Activated B cell treated with CpG ODN at 0.5 μM for 24 hours (primary cell): ENCODE measurements at regions of chr5 and their contacts with region 1.

Region 1: DNA sequence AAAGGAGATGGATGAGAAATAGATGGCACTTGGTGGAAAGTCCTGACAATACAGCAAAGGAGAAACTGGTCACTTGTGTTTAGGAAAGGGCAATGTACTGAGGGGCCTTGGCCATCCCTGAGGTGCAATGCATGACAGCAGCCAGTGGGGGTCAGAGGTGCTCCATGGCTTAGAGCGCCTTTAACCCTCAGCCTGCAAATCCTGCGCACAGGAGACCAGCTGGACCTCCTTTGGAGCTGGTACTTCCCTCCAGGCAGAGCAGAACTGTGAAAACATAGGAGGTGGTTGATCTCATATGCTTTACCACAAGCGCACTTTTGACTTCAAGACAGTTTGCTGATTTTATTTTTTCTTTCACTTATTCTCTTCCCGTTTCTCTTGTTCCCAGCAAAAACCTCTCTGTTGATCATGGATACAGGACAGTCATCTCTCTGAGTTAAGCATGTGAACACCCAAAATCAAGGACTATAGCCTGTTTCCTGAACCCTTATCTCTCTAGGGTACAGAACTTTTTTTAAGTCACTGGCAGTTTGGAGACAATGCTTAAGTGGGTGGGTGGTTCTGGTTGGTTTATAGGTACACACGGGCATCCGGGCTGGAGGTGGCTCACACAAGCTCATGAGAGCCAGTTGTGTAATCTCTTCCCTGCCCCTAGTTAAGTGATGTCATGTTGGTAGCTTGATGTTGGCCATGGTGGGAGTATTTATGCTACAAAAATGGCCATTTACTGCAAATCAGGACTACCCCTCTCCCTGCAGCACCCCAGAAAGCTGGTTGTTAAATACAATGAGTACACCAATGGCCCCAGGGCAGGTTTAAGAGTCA is 37.6 kb upstream of the ANKRD55 start:
- DNase-seq: peak; percentile 60
- ATAC-seq: peak; percentile 98
- H3K4me3 Mint-ChIP-seq: peak overlapping the region; percentile 49
- H3K27ac Mint-ChIP-seq: peak overlapping the region; percentile 37
- H3K4me1 Mint-ChIP-seq: peaks cover 23% of the 10 kb centered on the region
- H3K27me3 Mint-ChIP-seq: no peaks in the 10 kb centered on the region
- CTCF ChIP-seq: peak; percentile 73

Region 2: GRCh38 chr5:55172051-55172899 is 1098.5 kb before region 1 on chr5:
- CTCF ChIA-PET with region 1: no interaction called
- POLR2A ChIA-PET with region 1: no interaction called
- intact Hi-C with region 1: loop called (anchors 5 kb)
- DNase-seq: no peak
- ATAC-seq: peak; percentile 53
- H3K4me3 Mint-ChIP-seq: peak overlapping the region; percentile 88
- H3K27ac Mint-ChIP-seq: no peak overlapping the region
- H3K4me1 Mint-ChIP-seq: peaks cover 33% of the 10 kb centered on the region
- H3K27me3 Mint-ChIP-seq: peaks cover 51% of the 10 kb centered on the region
- CTCF ChIP-seq: peak; percentile 88

Region 3: GRCh38 chr5:56415356-56415765 is 144.6 kb after region 1 on chr5:
- CTCF ChIA-PET with region 1: interaction called, 10 read pairs
- POLR2A ChIA-PET with region 1: interaction called, 4 read pairs
- intact Hi-C with region 1: loop called (anchors 1 kb)
- DNase-seq: peak; percentile 48
- ATAC-seq: peak; percentile 71
- H3K4me3 Mint-ChIP-seq: peak overlapping the region; percentile 78
- H3K27ac Mint-ChIP-seq: peak overlapping the region; percentile 99
- H3K4me1 Mint-ChIP-seq: peaks cover 82% of the 10 kb centered on the region
- H3K27me3 Mint-ChIP-seq: no peaks in the 10 kb centered on the region
- CTCF ChIP-seq: no peak

Region 4: DNA sequence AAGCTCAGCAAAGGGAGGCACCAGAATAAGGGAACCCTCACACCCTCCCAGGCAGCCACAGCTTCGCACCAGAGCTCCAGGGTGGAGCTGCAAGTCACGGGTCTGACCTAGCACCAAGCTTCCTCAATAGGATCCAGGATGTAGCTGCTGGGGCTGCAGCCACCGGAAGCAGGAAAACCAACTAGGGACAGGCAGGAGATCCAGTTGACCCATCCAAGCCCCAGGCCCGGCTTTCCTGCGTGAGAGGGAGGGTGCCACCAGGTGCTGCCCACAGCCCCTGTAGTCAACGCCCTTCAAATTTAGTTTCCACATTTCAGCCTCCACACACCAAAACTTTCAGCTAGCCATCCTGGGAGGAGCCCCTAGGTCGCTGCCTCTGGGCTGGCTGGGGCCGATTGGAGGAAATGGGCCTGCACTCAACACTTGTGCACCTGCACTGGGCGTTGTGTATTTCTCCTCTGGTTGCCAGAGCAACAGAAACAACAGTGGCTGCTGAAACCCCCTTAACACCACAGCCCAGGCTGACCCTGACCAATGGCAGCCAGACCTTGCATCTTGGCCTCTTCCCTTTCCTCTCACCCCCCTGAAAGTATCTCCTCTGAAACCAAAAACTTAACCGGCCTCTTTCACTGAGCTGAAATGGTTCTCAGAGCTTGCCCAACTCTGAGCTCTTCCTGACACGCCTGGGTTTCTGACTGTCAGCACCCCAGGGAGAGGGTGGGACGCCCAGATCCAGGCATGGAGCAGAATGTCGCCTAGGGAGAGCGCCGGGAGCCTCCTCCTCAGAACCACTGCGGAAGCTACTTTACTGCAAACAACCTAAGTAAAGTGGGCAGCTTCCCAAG is 318.1 kb after region 1 on chr5:
- CTCF ChIA-PET with region 1: interaction called, 4 read pairs
- POLR2A ChIA-PET with region 1: no interaction called
- intact Hi-C with region 1: loop called (anchors 2 kb)
- DNase-seq: peak; percentile 69
- ATAC-seq: peak; percentile 86
- H3K4me3 Mint-ChIP-seq: peak overlapping the region; percentile 64
- H3K27ac Mint-ChIP-seq: peak overlapping the region; percentile 97
- H3K4me1 Mint-ChIP-seq: peaks cover 69% of the 10 kb centered on the region
- H3K27me3 Mint-ChIP-seq: no peaks in the 10 kb centered on the region
- CTCF ChIP-seq: no peak

Region 5: GRCh38 chr5:56814963-56815658 is 544.3 kb after region 1 on chr5 and contains the start of gene MAP3K1:
- CTCF ChIA-PET with region 1: interaction called, 11 read pairs
- POLR2A ChIA-PET with region 1: no interaction called
- intact Hi-C with region 1: loop called (anchors 1 kb)
- DNase-seq: peak; percentile 86
- ATAC-seq: peak; percentile 63
- H3K4me3 Mint-ChIP-seq: peak within 1 kb of the TSS; percentile 93
- H3K27ac Mint-ChIP-seq: peak within 1 kb of the TSS; percentile 93
- H3K4me1 Mint-ChIP-seq: peaks cover 50% of the 10 kb centered on the region
- H3K27me3 Mint-ChIP-seq: no peaks in the 10 kb centered on the region
- CTCF ChIP-seq: no peak
- total RNA-seq, gene MAP3K1: 92.8 and 102 TPM in 2 replicates

Region 6: DNA sequence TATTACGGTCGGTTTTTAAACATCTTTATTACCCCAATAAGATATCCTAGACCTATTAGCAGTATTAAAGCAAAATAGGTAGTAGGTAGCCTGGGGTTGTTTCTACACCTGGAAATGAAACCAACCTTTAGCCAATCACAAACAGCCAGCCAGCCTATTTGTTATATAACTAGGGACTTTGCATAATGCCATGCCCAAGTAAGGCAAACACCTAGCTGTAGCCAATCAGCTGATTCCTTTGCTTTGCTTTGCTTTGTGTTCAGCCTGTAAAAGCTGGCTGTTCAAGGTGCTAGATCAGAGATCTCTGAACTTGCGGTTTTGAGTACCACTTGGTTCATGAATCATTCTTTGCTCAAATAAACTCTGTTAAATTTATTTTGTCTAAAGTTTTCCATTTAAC is 592.1 kb after region 1 on chr5:
- CTCF ChIA-PET with region 1: interaction called, 12 read pairs
- POLR2A ChIA-PET with region 1: no interaction called
- intact Hi-C with region 1: no loop called
- DNase-seq: no peak
- ATAC-seq: no peak
- H3K4me3 Mint-ChIP-seq: no peak overlapping the region
- H3K27ac Mint-ChIP-seq: no peak overlapping the region
- H3K4me1 Mint-ChIP-seq: peaks cover 17% of the 10 kb centered on the region
- H3K27me3 Mint-ChIP-seq: no peaks in the 10 kb centered on the region
- CTCF ChIP-seq: no peak

Region 7: DNA sequence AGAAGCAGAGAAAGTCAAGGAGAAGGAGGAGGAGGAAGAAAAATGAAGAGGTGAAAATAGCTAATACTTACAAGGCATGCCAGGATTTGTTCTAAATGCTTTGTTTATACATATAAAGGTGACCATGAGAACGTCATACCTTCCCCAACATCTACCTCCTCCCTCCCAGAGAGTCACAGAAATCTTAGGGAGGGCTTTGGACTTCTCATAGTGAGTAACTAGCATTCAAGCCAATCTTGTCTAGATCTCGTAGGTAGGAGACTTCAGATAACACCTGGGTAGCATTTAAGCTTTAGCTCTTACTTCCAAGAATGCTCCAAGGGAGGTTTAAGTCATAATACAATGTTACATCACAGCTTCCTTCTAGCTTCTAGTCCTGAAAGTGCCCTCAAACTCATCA is 866.6 kb after region 1 on chr5:
- CTCF ChIA-PET with region 1: interaction called, 29 read pairs
- POLR2A ChIA-PET with region 1: interaction called, 4 read pairs
- intact Hi-C with region 1: loop called (anchors 1 kb)
- DNase-seq: no peak
- ATAC-seq: no peak
- H3K4me3 Mint-ChIP-seq: no peak overlapping the region
- H3K27ac Mint-ChIP-seq: no peak overlapping the region
- H3K4me1 Mint-ChIP-seq: no peaks in the 10 kb centered on the region
- H3K27me3 Mint-ChIP-seq: peaks cover 14% of the 10 kb centered on the region
- CTCF ChIP-seq: no peak